ENCODE measurements at regions of chr1 and their contacts with region 1.

Region 1: GRCh38 chr1:163130225-163130856 is 61.2 kb downstream of the RGS4 start:
- DNase-seq: no peak
- ATAC-seq: no peak
- H3K4me3 ChIP-seq: no peak overlapping the region
- H3K27ac ChIP-seq: no peak overlapping the region
- H3K4me1 ChIP-seq: no peaks in the 10 kb centered on the region
- H3K27me3 ChIP-seq: peaks cover 4% of the 10 kb centered on the region; the same call in 1 of the 2 replicates
- CTCF ChIP-seq: no peak

Region 2: DNA sequence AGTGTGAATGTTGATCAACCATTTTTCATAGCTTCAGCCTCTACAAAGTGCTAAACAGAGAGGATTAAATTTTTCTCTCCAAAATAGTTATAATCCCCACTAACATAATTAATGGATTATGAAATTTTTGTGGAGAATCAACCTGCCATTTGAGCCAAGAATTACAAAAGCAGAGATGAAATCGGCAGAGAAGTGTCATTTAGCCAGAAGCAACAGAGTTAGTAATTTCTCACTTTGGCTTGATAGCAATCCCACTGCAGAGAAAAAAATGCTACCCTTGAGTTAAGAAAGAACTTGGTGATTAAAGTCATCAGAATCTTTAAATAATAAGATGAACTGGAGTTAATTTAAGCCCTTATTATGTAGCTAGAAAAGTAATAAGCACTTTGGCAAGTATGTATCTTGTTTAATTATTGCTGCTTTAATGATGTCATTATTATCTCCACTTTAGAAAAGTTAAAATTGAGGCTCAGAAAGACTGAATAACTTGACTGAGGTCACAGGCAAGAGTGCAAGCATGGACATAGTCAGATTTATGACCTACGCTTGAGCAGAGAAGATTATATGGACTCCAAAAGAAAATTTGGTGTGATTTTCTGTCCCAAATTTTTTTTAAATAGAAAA is 23.9 kb before region 1 on chr1:
- CTCF ChIA-PET with region 1: no interaction called
- POLR2A ChIA-PET with region 1: no interaction called
- intact Hi-C with region 1: loop called (anchors 2 kb)
- DNase-seq: no peak
- ATAC-seq: no peak
- H3K4me3 ChIP-seq: no peak overlapping the region
- H3K27ac ChIP-seq: no peak overlapping the region
- H3K4me1 ChIP-seq: no peaks in the 10 kb centered on the region
- H3K27me3 ChIP-seq: no peaks in the 10 kb centered on the region
- CTCF ChIP-seq: no peak